AG04450 (cell line): ENCODE measurements at regions of chr11 and their contacts with region 1.

Region 1: GRCh38 chr11:70005107-70005818 is 72.9 kb upstream of the ANO1 start:
- DNase-seq: peak; percentile 89
- H3K4me3 ChIP-seq: no peak overlapping the region
- H3K27ac ChIP-seq: peak overlapping the region; percentile 91
- H3K27me3 ChIP-seq: no peaks in the 10 kb centered on the region
- CTCF ChIP-seq: no peak

Region 2: GRCh38 chr11:70019576-70020011 is 14.3 kb after region 1 on chr11:
- CTCF ChIA-PET with region 1: no interaction called
- POLR2A ChIA-PET with region 1: interaction called, 10 read pairs
- DNase-seq: no peak
- H3K4me3 ChIP-seq: no peak overlapping the region
- H3K27ac ChIP-seq: no peak overlapping the region
- H3K27me3 ChIP-seq: no peaks in the 10 kb centered on the region
- CTCF ChIP-seq: no peak

Region 3: DNA sequence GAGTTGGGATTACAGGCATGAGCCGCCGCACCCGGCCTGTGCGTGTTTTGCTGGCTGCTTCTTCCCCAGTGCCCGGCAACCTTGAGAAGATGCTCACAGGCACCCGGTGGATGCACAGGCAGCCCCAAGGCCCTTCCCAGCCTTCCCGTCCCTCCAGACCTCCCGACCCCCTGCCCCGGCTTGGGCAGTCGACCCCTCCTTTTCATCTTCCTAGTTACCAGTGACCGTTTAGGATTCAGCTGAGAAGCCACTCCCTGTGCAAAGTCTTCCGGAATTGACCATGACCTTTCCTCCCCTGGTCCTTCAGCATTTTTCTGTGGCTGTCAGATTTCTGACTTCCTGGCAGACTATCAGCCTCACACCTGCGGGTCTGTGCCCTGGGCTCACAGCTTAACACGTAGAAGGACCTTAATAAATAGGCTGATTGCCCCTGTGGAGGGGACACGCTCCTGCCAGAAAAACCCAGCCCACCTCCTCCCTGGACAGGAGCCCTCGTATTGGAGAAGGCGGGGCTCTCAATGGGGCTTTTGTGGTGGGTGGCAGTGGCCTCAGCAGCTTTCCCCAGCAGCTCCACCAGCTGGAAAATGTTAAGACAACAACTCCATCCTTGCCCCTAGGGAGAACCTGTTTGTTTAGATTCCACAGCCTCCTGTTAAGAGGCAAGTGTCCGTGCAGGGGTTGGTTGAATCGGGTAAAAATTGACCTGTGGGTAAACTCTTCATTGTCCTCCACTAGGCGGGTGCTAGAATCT is 62.5 kb after region 1 on chr11:
- CTCF ChIA-PET with region 1: no interaction called
- POLR2A ChIA-PET with region 1: no interaction called
- DNase-seq: no peak
- H3K4me3 ChIP-seq: no peak overlapping the region
- H3K27ac ChIP-seq: no peak overlapping the region
- H3K27me3 ChIP-seq: peaks cover 42% of the 10 kb centered on the region
- CTCF ChIP-seq: no peak